A549 (cell line): ENCODE measurements at regions of chr9 and their contacts with region 1.

Region 1: DNA sequence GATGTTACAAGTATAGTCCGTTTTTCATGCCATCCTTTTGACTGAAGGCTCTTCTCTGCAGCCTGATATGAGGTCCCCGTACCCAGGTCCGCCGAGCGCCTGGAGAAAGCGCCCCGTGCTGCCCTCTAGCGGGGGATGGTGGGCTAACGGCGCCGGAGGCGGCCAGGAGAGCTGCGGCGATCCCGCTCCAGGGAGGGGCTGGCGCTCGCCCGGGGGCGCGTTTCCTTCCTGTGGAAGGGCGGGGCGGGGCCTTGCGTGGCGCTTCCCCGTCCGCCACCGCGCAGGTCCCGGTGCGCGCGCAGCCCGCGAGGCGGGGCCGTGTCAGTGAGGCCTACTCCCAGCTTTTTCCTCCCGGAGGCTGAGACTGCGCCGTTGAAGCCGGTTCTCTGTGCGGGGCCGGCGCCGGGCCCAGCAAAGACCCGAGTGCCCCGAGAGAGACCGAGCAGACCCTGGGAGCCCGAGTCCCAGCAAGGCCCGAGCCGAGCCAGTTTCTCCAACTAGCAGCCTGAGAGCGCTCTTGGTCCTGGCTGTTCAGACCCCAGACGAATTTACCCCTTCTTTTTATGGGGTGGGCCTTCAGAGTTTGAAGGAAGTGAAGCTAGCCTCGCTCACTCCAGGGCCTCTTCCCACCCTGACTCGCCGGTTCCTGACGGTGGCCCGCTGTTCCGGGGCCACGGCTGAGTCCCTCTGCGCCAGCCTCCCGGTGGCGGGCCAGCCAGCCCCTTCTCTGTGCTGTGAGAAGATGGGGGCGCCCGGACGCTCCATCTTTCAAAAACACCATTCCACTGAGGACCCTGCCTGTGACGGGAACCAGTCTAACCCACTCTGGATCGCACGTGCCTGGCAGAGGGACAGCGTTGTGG is 9.7 kb upstream of the PHF2 start:
- DNase-seq: peak; percentile 91 to 95
- ATAC-seq: peak; percentile 93 to 98
- H3K4me3 ChIP-seq: peak overlapping the region; percentile 57
- H3K27ac ChIP-seq: peak overlapping the region; percentile 92 to 94
- H3K4me1 ChIP-seq: peaks cover 12% of the 10 kb centered on the region
- CTCF ChIP-seq: peak; percentile 89
- EP300 ChIP-seq: no peak
- POLR2A ChIP-seq: peak; percentile 80
- RAD21 ChIP-seq: peak; percentile 64 to 78

Region 2: DNA sequence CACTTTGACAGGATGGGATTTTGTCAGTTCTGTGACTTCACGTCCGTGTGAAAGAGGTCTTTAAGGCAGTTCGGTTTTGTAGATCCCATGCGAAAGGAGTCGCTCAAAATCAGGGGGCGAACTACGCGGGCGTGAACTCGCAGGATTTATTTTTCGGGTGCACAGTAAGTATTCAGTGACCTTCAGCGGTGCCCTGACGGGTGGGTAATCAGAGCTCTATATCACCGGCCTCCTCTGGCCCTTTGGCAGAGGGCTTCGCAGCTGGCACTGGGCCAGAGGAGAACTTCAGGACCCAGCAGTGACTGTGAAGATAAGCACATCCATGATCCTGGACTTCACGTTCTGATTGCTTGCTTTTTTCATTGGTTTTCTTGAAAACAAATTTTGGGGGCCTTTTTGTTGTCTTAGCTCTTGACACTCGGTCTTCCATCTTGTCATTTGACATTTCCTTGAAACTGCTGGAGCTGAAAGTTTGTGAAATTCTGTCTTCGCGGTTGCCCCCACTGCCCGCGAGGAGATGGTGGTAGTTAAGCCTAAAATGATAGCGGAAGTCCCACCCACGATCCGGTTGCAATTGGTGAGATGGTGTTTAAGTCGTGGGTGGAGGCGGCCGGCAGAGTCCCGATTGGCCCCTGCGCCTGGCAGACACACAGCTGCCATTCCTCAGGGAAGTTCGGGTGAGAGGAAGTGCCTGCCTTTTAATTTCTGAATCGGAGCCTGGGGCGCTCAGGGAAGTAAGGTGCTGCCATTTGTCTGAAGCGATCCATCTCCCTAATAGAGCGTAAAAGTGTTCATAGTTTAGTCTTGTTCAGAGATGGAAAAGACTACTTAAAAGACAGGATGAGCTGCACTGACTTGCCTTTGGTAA is 113.4 kb before region 1 on chr9 and contains the start of gene FAM120AOS:
- CTCF ChIA-PET with region 1: interaction called, 11 read pairs
- POLR2A ChIA-PET with region 1: interaction called, 8 read pairs
- DNase-seq: peak; percentile 84 to 96
- ATAC-seq: peak; percentile 79 to 92
- H3K4me3 ChIP-seq: peak within 1 kb of the TSS; percentile 77
- H3K27ac ChIP-seq: peak within 1 kb of the TSS; percentile 89 to 98
- H3K4me1 ChIP-seq: peaks cover 48% of the 10 kb centered on the region
- CTCF ChIP-seq: no peak
- EP300 ChIP-seq: no peak
- POLR2A ChIP-seq: peak; percentile 21; the same call in 1 of the 2 replicates
- RAD21 ChIP-seq: no peak; a peak in 1 of 5 replicates
- polyA plus RNA-seq, gene FAM120AOS: 79.7 and 85.3 TPM in 2 replicates

Region 3: GRCh38 chr9:93520523-93520922 is 46.1 kb before region 1 on chr9:
- CTCF ChIA-PET with region 1: interaction called, 10 read pairs
- POLR2A ChIA-PET with region 1: no interaction called
- DNase-seq: peak in 1 of 2 experiments; percentile 22
- ATAC-seq: peak in 1 of 2 experiments; percentile 65; a peak in 3 of 6 replicates
- H3K4me3 ChIP-seq: no peak overlapping the region
- H3K27ac ChIP-seq: no peak overlapping the region
- H3K4me1 ChIP-seq: no peaks in the 10 kb centered on the region
- CTCF ChIP-seq: no peak
- EP300 ChIP-seq: no peak
- POLR2A ChIP-seq: no peak
- RAD21 ChIP-seq: no peak